ENCODE measurements at regions of chr1 and their contacts with region 1.

Region 1: DNA sequence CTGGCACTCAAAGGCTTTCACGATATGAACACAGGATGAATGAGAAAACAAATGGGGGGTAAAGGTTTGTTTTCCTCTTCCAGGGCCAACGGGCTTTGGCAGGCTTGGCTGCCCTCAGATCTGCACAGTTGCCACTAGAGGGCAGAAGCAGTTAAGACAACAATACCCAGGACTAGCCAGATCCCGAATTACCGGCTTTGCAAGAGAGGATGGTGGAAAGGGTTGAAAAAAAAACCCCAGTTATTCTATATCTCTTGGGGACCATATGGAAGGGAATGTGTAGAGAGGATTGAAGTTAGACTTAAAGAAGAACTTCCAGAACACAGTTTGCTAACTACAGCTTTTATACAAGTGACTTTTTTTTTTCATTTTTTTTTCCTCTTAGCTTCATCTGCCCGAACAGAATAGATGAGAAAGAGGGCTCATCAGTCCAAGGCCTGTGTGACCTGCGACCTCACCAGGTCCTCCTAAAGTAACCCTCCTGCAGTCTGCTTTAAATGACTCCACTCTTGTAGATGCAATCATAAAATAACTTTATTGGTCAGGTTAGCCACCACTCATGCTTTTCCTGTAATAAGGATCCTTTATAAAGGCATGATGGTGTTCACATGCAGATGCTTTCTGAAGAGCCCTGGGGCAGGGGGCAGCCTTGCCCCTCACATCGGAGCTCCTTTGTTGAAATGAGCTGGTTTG is 10.7 kb downstream of the FMOD start:
- DNase-seq: no peak
- H3K4me3 ChIP-seq: no peak overlapping the region
- H3K27ac ChIP-seq: peak overlapping the region in 1 of 4 donors; percentile 2
- H3K4me1 ChIP-seq: peaks cover 3 to 42% (median 32%) of the 10 kb centered on the region in 4 donors
- H3K27me3 ChIP-seq: no peaks in the 10 kb centered on the region
- CTCF ChIP-seq: peak; percentile 89 to 96 (median 90)
- EP300 ChIP-seq: no peak
- POLR2A ChIP-seq: no peak

Region 2: GRCh38 chr1:203273206-203273868 is 66.9 kb before region 1 on chr1:
- intact Hi-C with region 1: loop called (anchors 2 kb)
- DNase-seq: peak; percentile 96
- H3K4me3 ChIP-seq: peak overlapping the region; percentile 30 to 53 (median 38)
- H3K27ac ChIP-seq: peak overlapping the region; percentile 93 to 98 (median 95)
- H3K4me1 ChIP-seq: peaks cover 60 to 83% (median 70%) of the 10 kb centered on the region in 4 donors
- H3K27me3 ChIP-seq: no peaks in the 10 kb centered on the region
- CTCF ChIP-seq: peak; percentile 86 to 99 (median 99)
- EP300 ChIP-seq: no peak
- POLR2A ChIP-seq: no peak

Region 3: DNA sequence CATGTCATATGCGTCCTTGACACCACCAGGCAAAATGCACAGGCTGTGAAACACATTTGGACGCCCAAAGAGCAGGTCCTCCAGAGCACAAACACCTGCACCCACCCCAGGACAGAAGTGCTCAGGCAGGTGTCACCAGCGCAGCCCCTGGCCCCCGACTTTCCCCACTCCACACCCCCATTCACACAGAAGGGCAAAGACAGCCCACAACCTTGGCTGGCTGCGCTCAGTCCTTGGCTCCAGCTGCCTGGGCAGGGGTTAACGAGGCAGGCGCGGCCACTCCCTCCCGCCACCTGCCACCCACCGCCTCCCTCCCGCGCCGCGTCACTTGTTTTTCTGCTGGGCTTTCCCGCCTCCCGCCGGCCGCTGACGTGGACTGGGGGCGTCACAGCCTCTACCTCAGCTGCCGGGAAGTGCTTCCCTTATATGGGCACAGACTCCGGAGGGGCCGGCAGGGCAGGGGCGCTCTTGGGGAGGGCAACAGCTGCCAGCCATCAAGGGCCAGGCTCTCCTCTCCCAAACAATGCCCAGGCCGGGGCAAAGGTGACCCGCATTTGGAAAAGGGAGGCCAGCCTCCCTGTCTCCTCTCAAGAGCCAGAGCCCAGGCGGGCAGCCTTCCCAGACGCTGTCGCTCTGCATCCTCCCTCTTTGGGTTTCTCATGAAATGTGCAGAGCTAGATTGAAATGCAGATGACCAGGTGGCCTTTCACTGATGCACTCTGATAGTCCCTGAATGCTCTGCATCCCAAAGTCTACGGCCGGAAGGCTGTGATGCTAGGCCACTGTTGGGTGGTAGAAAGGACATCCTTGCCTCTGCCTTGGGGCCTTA is 49.8 kb before region 1 on chr1:
- intact Hi-C with region 1: no loop called
- DNase-seq: peak; percentile 100
- H3K4me3 ChIP-seq: peak overlapping the region; percentile 39 to 51 (median 44)
- H3K27ac ChIP-seq: peak overlapping the region; percentile 88 to 97 (median 91)
- H3K4me1 ChIP-seq: peaks cover 53 to 64% (median 60%) of the 10 kb centered on the region in 4 donors
- H3K27me3 ChIP-seq: no peaks in the 10 kb centered on the region
- CTCF ChIP-seq: no peak
- EP300 ChIP-seq: peak; percentile 98
- POLR2A ChIP-seq: peak; percentile 61

Region 4: GRCh38 chr1:203378556-203379245 is 38.4 kb after region 1 on chr1:
- intact Hi-C with region 1: no loop called
- DNase-seq: peak; percentile 81
- H3K4me3 ChIP-seq: no peak overlapping the region
- H3K27ac ChIP-seq: peak overlapping the region in 2 of 4 donors; percentile 58 to 65
- H3K4me1 ChIP-seq: peaks cover 34 to 58% (median 50%) of the 10 kb centered on the region in 4 donors
- H3K27me3 ChIP-seq: no peaks in the 10 kb centered on the region
- CTCF ChIP-seq: no peak
- EP300 ChIP-seq: no peak
- POLR2A ChIP-seq: no peak

Region 5: GRCh38 chr1:203440771-203441170 is 100.5 kb after region 1 on chr1:
- intact Hi-C with region 1: loop called (anchors 2 kb)
- DNase-seq: no peak
- H3K4me3 ChIP-seq: no peak overlapping the region
- H3K27ac ChIP-seq: peak overlapping the region in 3 of 4 donors; percentile 11 to 59 (median 52)
- H3K4me1 ChIP-seq: peaks cover 14 to 26% (median 25%) of the 10 kb centered on the region in 4 donors
- H3K27me3 ChIP-seq: no peaks in the 10 kb centered on the region
- CTCF ChIP-seq: peak; percentile 71 to 83 (median 78)
- EP300 ChIP-seq: no peak
- POLR2A ChIP-seq: no peak

Region 6: GRCh38 chr1:203486618-203487370 is 146.5 kb after region 1 on chr1:
- intact Hi-C with region 1: loop called (anchors 1 kb)
- DNase-seq: no peak
- H3K4me3 ChIP-seq: peak overlapping the region; percentile 31 to 52 (median 33)
- H3K27ac ChIP-seq: peak overlapping the region; percentile 78 to 94 (median 86)
- H3K4me1 ChIP-seq: peaks cover 23 to 75% (median 72%) of the 10 kb centered on the region in 4 donors
- H3K27me3 ChIP-seq: no peaks in the 10 kb centered on the region
- CTCF ChIP-seq: no peak
- EP300 ChIP-seq: no peak
- POLR2A ChIP-seq: no peak

Region 7: DNA sequence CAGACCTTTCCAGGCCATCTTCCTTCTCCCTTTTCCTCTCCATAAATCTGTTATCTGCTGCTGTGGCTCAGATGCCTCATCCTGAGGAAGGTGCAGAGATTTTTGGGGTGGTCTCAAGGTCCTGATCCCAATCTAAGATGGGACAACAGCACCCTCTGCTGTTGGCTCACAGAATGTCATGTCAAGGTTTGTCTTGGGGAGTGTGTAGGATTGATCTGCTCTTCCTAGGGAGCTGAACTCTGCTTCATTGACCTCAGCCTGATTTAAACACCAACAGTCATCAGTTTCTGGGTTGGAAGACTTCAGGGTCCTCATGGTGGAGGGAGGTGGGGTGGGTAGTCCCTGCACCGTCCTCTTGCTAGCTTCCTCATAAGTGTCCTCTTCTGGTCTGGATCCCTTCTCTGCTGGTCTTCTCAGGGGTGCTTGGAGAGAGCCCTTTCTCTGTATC is 361.9 kb after region 1 on chr1:
- intact Hi-C with region 1: loop called (anchors 10 kb)
- DNase-seq: no peak
- H3K4me3 ChIP-seq: no peak overlapping the region
- H3K27ac ChIP-seq: peak overlapping the region; percentile 63 to 91 (median 86)
- H3K4me1 ChIP-seq: peaks cover 5 to 67% (median 46%) of the 10 kb centered on the region in 4 donors
- H3K27me3 ChIP-seq: no peaks in the 10 kb centered on the region
- CTCF ChIP-seq: peak; percentile 77 to 93 (median 79)
- EP300 ChIP-seq: no peak
- POLR2A ChIP-seq: no peak